Posterior vena cava (tissue), 2 donors: ENCODE measurements at regions of chr11 and their contacts with region 1.

Region 1: GRCh38 chr11:33116535-33116934 is 44.7 kb downstream of the CSTF3 start:
- DNase-seq: no peak

Region 2: DNA sequence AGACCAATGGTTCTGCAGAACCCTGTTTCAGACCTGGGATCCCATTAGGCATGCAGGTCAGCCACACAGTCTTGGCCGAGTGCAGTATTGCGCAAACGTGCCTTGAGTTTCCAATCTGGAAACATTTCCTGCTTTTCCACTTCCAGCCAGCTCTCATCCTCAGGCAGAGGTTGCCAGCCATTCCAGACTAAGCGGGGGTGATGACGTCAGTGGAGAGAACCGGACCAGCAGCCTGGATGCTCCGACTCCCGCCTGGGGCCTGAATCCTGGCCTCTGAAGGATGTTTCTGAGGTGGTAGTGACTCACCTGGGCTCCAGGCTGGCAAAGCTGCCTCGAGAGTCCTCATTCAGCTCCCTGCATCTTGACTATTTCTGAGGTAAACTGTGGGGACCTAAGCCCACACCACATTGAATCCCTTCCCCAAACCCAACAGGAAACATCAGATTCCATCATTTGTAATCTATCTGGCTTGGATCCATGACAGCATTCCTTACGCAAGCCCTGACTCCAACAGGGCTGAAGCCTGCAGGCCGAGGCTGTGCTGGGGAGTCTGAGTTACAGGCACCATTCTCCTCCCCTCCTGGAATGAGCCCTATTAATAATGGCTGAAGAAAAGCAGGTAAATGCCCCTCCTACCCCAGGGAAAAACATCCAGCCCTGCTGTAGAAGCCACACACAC is 1158.3 kb after region 1 on chr11:
- intact Hi-C with region 1: loop called in 1 of 2 experiments (anchors 5 kb)
- DNase-seq: peak; percentile 96